Common myeloid progenitor, CD34-positive (primary cell): ENCODE measurements at regions of chr1 and their contacts with region 1.

Region 1: GRCh38 chr1:151006327-151007052 is at the start of gene MINDY1:
- DNase-seq: peak; percentile 73 to 81 (median 78)
- H3K4me3 ChIP-seq: peak within 1 kb of the TSS; percentile 64 to 88 (median 84)
- H3K27ac ChIP-seq: peak within 1 kb of the TSS; percentile 95 to 98
- H3K4me1 ChIP-seq: peaks cover 36 to 95% (median 87%) of the 10 kb centered on the region in 4 experiments
- H3K27me3 ChIP-seq: no peaks in the 10 kb centered on the region

Region 2: GRCh38 chr1:150979092-150980056 is 27.1 kb before region 1 on chr1:
- CTCF ChIA-PET with region 1: interaction called, 235 read pairs
- POLR2A ChIA-PET with region 1: interaction called, 7 read pairs
- DNase-seq: peak; percentile 89 to 94 (median 90)
- H3K4me3 ChIP-seq: peak overlapping the region in 6 of 7 experiments; percentile 23 to 75 (median 60)
- H3K27ac ChIP-seq: peak overlapping the region; percentile 33 to 62
- H3K4me1 ChIP-seq: peaks cover 18 to 67% (median 53%) of the 10 kb centered on the region in 4 experiments
- H3K27me3 ChIP-seq: no peaks in the 10 kb centered on the region

Region 3: DNA sequence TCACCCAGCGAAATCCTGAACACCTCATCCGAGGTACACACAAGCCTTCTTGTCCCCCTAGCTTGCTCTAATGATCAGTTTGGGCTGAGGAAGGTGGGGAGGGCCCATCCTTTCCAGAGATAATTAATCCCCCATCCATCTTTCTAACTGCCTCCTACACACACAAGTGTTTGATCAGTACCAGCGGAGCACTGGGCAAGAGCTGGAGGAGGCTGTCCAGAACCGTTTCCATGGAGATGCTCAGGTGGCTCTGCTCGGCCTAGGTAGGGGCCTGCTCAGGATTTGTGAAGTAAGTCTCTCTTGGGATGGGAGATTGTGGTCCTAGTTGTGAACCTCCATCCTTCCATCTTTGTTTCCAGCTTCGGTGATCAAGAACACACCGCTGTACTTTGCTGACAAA is 18.6 kb before region 1 on chr1:
- CTCF ChIA-PET with region 1: interaction called, 235 read pairs
- POLR2A ChIA-PET with region 1: no interaction called
- DNase-seq: no peak
- H3K4me3 ChIP-seq: no peak overlapping the region
- H3K27ac ChIP-seq: no peak overlapping the region
- H3K4me1 ChIP-seq: no peaks in the 10 kb centered on the region
- H3K27me3 ChIP-seq: no peaks in the 10 kb centered on the region

Region 4: DNA sequence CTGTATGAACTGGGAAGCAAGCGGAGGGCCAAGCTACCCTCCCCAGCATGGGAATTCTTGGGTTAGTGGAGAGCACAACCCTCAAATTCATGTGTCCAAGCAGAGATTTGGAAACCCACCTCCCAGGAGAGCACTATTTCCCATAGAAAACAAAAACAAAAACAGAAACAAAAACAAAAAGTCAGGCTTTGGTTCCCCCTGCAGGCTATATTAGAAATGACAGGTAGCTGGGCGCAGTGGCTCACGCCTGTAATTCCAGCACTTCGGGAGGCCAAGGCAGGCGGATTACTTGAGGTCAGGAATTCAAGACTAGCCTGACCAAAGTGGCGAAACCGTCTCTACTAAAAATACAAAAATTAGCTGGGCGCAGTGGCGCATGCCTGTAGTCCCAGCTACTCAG is 10.6 kb before region 1 on chr1:
- CTCF ChIA-PET with region 1: interaction called, 65 read pairs
- POLR2A ChIA-PET with region 1: interaction called, 4 read pairs
- DNase-seq: peak in 2 of 3 donors; percentile 17 to 33
- H3K4me3 ChIP-seq: no peak overlapping the region
- H3K27ac ChIP-seq: no peak overlapping the region
- H3K4me1 ChIP-seq: peaks cover 8 to 28% (median 24%) of the 10 kb centered on the region in 4 experiments
- H3K27me3 ChIP-seq: no peaks in the 10 kb centered on the region

Region 5: GRCh38 chr1:151619489-151620093 is 613.1 kb after region 1 on chr1:
- CTCF ChIA-PET with region 1: no interaction called
- POLR2A ChIA-PET with region 1: no interaction called
- DNase-seq: peak in 2 of 3 donors; percentile 2 to 7
- H3K4me3 ChIP-seq: no peak overlapping the region
- H3K27ac ChIP-seq: no peak overlapping the region
- H3K4me1 ChIP-seq: peaks cover 0 to 23% (median under 1%) of the 10 kb centered on the region in 4 experiments
- H3K27me3 ChIP-seq: no peaks in the 10 kb centered on the region